ENCODE measurements at regions of chr9 and their contacts with region 1.

Region 1: DNA sequence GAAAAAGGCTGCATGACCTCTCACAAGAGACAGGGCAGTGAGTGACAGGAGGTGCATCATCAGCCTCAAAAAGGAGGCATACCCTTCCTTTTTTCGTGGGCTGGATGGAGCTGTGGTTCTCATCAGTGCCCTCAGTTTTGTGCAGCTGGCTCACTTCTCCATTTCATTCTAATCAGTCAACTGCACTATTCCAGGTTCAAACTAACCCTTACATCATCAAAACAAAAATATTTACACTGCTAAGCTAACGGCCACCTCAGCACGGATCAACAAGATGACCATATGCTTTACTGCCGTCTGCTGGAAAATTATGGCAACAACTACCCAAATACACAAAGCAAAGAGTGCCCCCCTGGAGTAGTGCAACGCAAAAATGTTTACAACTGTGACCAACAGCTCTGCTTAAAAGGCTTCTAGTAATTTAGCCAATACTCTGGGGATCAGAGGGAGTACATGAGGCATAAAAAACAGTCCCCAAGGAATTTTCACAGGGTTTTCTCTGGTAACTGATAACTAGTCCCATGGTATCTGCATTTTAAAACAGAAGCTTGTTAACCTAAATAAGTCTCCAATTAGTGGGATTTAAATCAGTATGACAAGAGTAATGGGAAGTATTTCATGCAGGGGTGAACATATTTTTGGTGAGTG is 10.8 kb downstream of the KCNV2 start:
- DNase-seq: peak in 1 of 10 donors; percentile 20

Region 2: GRCh38 chr9:2132484-2133082 is 595.5 kb before region 1 on chr9:
- intact Hi-C with region 1: loop called (anchors 10 kb)
- DNase-seq: no peak

Region 3: DNA sequence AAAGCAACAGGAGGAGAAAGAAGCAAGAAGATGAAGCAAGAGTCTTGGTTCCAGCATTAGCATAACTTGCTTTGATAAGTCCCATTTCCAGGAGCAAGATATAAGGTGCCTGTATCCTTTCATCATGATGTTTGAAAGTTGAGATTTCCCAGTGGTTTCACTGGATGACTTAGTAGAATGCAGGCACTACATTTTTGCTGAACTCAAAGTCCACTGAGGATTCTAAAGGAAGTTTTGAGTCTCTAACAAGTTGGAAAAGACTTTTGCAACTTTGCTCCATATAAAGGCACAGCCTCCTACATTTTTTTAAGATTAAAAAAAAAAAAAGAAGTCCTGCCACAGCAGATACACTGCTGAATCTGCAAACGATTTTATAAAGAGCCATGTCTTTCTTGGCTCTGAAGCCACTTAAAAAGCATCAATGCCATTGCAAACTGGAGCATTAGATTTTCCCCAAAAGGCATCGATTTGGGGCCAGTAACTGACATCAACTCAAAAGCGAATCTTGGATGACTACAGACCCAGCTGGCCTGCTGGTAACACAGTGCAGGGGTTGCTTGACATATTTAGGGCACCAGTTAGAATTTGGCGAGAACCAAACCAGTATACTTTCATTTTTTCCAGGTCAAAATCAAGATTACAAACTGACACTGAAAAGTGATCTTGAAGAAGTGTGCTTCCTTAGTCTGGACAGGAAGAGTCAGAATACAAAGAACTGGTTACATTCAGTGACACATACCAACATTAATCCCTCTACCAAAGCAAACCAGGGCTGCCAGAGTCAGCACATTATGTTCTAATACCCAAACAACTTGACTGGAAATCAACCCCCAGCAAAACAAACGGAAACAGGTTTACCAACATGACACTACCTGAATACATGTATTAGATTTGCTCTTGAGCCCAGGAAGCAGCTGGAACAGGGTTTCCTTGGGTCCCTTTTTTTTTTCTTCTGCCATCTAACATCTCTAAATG is 49.9 kb before region 1 on chr9:
- intact Hi-C with region 1: no loop called
- DNase-seq: no peak

Region 4: GRCh38 chr9:3342159-3342777 is 614.2 kb after region 1 on chr9:
- intact Hi-C with region 1: no loop called
- DNase-seq: no peak

Measured in posterior cingulate gyrus (tissue), 11 donors.